PC-9 (cell line): ENCODE measurements at regions of chr10 and their contacts with region 1.

Region 1: DNA sequence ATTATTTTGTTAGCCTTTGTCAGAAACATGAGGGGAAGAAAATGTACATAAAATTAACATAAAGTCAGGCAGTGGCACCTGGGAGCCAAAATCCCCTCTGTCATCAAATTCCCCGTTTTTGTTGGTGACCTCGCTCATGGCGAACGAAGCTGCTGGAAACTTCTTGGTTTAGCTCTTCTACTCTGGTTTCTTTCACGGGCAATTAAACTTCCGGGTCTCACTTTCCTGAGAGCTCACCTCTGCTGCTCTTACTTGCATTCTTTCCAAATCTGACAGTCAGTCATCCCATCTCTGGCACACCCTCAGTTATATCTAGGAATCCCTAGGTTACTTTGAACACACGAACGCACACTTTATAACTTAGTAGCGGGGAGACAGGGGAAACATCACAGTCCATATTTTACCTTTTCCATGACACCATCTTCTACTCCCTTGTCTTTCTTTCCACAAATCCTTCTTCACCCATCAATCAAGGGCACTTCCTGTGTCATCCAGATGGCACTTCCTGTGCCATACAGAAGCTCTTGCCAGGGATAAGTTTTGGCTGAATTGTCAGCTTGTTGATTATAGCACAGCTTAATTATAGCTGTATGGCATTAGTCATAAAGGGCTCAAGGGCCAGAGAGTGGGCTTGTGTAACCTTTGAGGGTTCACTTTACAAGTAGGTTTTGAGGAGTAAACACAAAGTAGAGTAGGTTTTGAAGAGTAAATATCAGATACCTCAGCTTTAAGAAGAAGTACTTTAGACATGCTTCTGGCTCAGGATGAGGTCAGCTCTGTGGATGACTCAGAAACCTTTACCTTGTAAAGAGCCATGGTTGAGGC is 105.1 kb downstream of the GATA3 start:
- DNase-seq: peak in 1 of 2 experiments; percentile 86
- H3K4me3 ChIP-seq: no peak overlapping the region
- H3K27ac ChIP-seq: peak overlapping the region; percentile 69
- H3K4me1 ChIP-seq: peaks cover 22% of the 10 kb centered on the region
- H3K27me3 ChIP-seq: no peaks in the 10 kb centered on the region
- CTCF ChIP-seq: no peak

Region 2: GRCh38 chr10:8146650-8147049 is 12.9 kb before region 1 on chr10:
- CTCF ChIA-PET with region 1: no interaction called
- POLR2A ChIA-PET with region 1: interaction called, 13 read pairs
- intact Hi-C with region 1: no loop called
- DNase-seq: peak; percentile 33 to 60
- H3K4me3 ChIP-seq: no peak overlapping the region
- H3K27ac ChIP-seq: no peak overlapping the region
- H3K4me1 ChIP-seq: no peaks in the 10 kb centered on the region
- H3K27me3 ChIP-seq: no peaks in the 10 kb centered on the region
- CTCF ChIP-seq: no peak